B cell (primary cell): ENCODE measurements at regions of chr12 and their contacts with region 1.

Region 1: DNA sequence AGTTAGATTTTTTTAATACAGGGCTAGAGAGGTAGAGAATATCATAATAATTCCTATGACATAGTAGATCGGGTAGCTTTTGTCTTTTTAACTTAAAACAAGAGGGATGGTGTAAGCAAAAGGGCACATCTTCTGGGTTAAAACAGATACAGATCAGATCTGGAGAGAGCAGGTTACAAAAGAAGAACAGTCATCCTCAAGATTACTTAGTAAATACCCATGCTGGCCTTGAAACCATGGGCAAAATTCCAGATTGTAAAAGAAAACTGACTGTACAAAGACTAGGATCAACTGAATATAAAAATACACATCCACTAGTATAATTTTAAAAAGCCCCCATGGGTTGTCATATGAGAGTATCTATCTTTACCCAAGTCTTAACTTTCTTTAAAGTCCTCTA is 76.7 kb downstream of the MED13L start:
- DNase-seq: no peak
- ATAC-seq: no peak
- H3K4me3 ChIP-seq: no peak overlapping the region
- H3K4me3 Mint-ChIP-seq: no peak overlapping the region
- H3K27ac ChIP-seq: no peak overlapping the region
- H3K27ac Mint-ChIP-seq: no peak overlapping the region
- H3K4me1 ChIP-seq: peaks cover 13 to 26% of the 10 kb centered on the region in 2 donors
- H3K4me1 Mint-ChIP-seq: peaks cover 61% of the 10 kb centered on the region
- H3K27me3 ChIP-seq: no peaks in the 10 kb centered on the region
- H3K27me3 Mint-ChIP-seq: no peaks in the 10 kb centered on the region
- CTCF ChIP-seq: no peak

Region 2: GRCh38 chr12:116043659-116044535 is 156.9 kb before region 1 on chr12:
- CTCF ChIA-PET with region 1: no interaction called
- POLR2A ChIA-PET with region 1: no interaction called
- intact Hi-C with region 1: no loop called
- DNase-seq: no peak
- ATAC-seq: no peak
- H3K4me3 ChIP-seq: no peak overlapping the region
- H3K4me3 Mint-ChIP-seq: no peak overlapping the region
- H3K27ac ChIP-seq: no peak overlapping the region
- H3K27ac Mint-ChIP-seq: no peak overlapping the region
- H3K4me1 ChIP-seq: no peaks in the 10 kb centered on the region
- H3K4me1 Mint-ChIP-seq: peaks cover 20% of the 10 kb centered on the region
- H3K27me3 ChIP-seq: no peaks in the 10 kb centered on the region
- H3K27me3 Mint-ChIP-seq: no peaks in the 10 kb centered on the region
- CTCF ChIP-seq: no peak

Region 3: DNA sequence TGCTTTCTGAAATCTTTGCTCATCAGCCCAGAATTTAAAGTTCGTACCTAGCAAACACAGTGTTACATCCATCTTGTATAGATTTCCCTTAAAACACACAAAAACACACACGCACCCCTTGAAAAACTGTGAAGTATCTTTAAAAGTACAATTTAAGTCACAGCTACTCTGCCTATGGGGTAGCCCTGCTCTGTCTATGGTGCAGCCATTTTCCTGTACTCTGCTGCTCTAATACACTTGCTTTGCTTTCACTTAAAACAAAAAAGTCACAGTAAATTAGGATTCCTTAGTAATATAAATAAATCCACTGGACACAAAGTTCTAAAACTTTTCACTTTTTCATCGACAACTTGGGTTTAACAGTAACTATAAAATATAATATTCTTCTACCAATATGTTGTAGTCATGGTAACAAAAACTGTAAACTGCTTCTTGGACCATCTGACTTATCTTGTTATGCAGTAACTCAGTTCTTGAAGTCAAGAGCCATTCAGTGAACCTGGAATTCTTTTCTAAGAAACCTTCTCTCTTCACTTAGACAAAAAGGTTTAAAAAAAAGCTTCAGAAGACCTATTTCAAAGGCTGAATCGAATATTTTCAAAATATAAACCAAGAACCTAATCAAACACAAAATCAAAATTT is 13.2 kb after region 1 on chr12:
- CTCF ChIA-PET with region 1: interaction called, 3 read pairs
- POLR2A ChIA-PET with region 1: no interaction called
- intact Hi-C with region 1: loop called (anchors 2 kb)
- DNase-seq: no peak
- ATAC-seq: no peak
- H3K4me3 ChIP-seq: no peak overlapping the region
- H3K4me3 Mint-ChIP-seq: no peak overlapping the region
- H3K27ac ChIP-seq: no peak overlapping the region
- H3K27ac Mint-ChIP-seq: no peak overlapping the region
- H3K4me1 ChIP-seq: peaks cover 8 to 43% of the 10 kb centered on the region in 2 donors
- H3K4me1 Mint-ChIP-seq: peaks cover 78% of the 10 kb centered on the region
- H3K27me3 ChIP-seq: no peaks in the 10 kb centered on the region
- H3K27me3 Mint-ChIP-seq: no peaks in the 10 kb centered on the region
- CTCF ChIP-seq: no peak